Activated CD8-positive, alpha-beta T cell treated with anti-CD3 and anti-CD28 coated beads, Interleukin-2, amount 10 ng/mL, durations not matched to agents 7 days and 5 days (primary cell): ENCODE measurements at regions of chr17 and their contacts with region 1.

Region 1: DNA sequence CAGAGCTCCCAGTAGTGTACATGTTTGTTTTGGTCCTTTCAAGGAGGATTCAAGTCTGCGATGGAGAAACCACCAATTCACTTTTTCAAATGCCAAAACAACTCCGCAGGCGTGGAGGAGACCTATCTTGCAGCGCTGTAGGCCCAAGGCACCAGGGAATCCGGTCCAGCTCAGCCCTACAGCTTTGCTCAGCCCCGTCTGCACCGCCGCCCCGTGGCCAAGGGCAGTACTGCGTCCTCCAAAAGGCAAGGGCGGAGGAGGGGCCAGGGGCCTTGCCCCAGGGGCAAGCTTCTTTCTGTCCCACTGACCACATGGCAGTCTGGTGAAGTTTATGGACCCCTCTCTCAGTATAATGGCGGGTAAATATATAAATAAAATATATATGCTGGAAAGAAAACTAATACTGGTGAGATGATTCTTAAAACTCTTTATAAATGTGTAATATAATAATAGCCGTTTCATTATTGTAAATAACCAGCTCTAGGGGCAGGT is 709 bp upstream of the CD300LG start:
- DNase-seq: peak; percentile 80
- ATAC-seq: peak; percentile 97
- H3K4me3 Mint-ChIP-seq: no peak overlapping the region
- H3K27ac Mint-ChIP-seq: no peak overlapping the region
- H3K4me1 Mint-ChIP-seq: no peaks in the 10 kb centered on the region
- H3K27me3 Mint-ChIP-seq: peaks cover 8% of the 10 kb centered on the region

Region 2: GRCh38 chr17:43431714-43432523 is 414.3 kb before region 1 on chr17:
- CTCF ChIA-PET with region 1: no interaction called
- POLR2A ChIA-PET with region 1: no interaction called
- DNase-seq: no peak
- ATAC-seq: no peak
- H3K4me3 Mint-ChIP-seq: no peak overlapping the region
- H3K27ac Mint-ChIP-seq: no peak overlapping the region
- H3K4me1 Mint-ChIP-seq: no peaks in the 10 kb centered on the region
- H3K27me3 Mint-ChIP-seq: peaks cover 19% of the 10 kb centered on the region

Region 3: DNA sequence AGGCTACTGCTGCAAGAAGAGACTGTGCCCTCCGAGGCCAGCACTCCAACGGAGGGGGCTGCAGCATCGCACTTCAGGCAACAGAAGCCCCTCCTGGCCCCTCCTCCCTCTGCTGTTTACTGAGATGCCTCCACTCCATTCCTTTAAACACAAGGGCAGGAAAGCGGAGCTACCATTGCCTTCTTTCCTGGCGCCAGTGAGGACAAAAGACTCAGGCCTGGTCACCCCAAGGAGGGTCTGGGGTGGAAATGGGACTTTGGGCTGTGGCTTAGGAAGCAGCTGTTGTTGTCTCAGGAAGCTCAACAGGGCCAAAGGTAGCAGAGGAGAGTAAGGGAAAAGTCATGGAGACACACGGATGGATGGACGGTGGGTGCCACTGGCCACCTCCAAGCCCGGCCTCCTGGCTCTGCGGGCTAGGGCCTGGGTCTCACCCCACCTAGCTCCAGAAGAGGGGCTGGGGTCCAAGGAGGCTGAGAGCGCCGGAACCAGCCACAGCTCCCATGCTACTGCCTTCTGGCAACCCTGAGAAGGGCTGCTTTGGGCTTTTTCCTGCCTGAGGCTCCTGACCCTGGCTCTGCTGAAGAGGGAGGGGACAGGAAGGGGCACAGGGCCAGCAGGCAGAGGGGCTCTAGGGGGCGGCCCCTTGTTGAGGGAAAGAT is 11.8 kb after region 1 on chr17:
- CTCF ChIA-PET with region 1: interaction called, 19 read pairs
- POLR2A ChIA-PET with region 1: no interaction called
- DNase-seq: no peak
- ATAC-seq: no peak
- H3K4me3 Mint-ChIP-seq: no peak overlapping the region
- H3K27ac Mint-ChIP-seq: no peak overlapping the region
- H3K4me1 Mint-ChIP-seq: no peaks in the 10 kb centered on the region
- H3K27me3 Mint-ChIP-seq: peaks cover 3% of the 10 kb centered on the region

Region 4: GRCh38 chr17:44014437-44015172 is 168.3 kb after region 1 on chr17 and contains the start of gene TMEM101:
- CTCF ChIA-PET with region 1: no interaction called
- POLR2A ChIA-PET with region 1: no interaction called
- DNase-seq: peak; percentile 94
- ATAC-seq: peak; percentile 98
- H3K4me3 Mint-ChIP-seq: peak within 1 kb of the TSS; percentile 100
- H3K27ac Mint-ChIP-seq: peak within 1 kb of the TSS; percentile 98
- H3K4me1 Mint-ChIP-seq: peaks cover 23% of the 10 kb centered on the region
- H3K27me3 Mint-ChIP-seq: no peaks in the 10 kb centered on the region
- total RNA-seq, gene TMEM101: 24.3 to 26.0 TPM